ENCODE measurements at regions of chr19 and their contacts with region 1.

Region 1: GRCh38 chr19:2475702-2476450 is at the start of gene GADD45B:
- DNase-seq: peak; percentile 96
- H3K4me3 Mint-ChIP-seq: peak within 1 kb of the TSS; percentile 89
- H3K27ac Mint-ChIP-seq: peak within 1 kb of the TSS; percentile 83
- H3K4me1 Mint-ChIP-seq: peaks cover 22% of the 10 kb centered on the region
- H3K27me3 Mint-ChIP-seq: peaks cover 3% of the 10 kb centered on the region
- total RNA-seq, gene GADD45B: 52.2 to 54.3 TPM

Region 2: GRCh38 chr19:2455851-2456570 is 19.9 kb before region 1 on chr19:
- CTCF ChIA-PET with region 1: interaction called, 7 read pairs
- POLR2A ChIA-PET with region 1: interaction called, 57 read pairs
- DNase-seq: peak; percentile 58
- H3K4me3 Mint-ChIP-seq: peak overlapping the region; percentile 80
- H3K27ac Mint-ChIP-seq: peak overlapping the region; percentile 81
- H3K4me1 Mint-ChIP-seq: peaks cover 29% of the 10 kb centered on the region
- H3K27me3 Mint-ChIP-seq: no peaks in the 10 kb centered on the region

Region 3: GRCh38 chr19:2494444-2495129 is 18.7 kb after region 1 on chr19:
- CTCF ChIA-PET with region 1: interaction called, 8 read pairs
- POLR2A ChIA-PET with region 1: interaction called, 127 read pairs
- DNase-seq: peak; percentile 69
- H3K4me3 Mint-ChIP-seq: peak overlapping the region; percentile 73
- H3K27ac Mint-ChIP-seq: peak overlapping the region; percentile 65
- H3K4me1 Mint-ChIP-seq: peaks cover 45% of the 10 kb centered on the region
- H3K27me3 Mint-ChIP-seq: peaks cover 38% of the 10 kb centered on the region

Region 4: DNA sequence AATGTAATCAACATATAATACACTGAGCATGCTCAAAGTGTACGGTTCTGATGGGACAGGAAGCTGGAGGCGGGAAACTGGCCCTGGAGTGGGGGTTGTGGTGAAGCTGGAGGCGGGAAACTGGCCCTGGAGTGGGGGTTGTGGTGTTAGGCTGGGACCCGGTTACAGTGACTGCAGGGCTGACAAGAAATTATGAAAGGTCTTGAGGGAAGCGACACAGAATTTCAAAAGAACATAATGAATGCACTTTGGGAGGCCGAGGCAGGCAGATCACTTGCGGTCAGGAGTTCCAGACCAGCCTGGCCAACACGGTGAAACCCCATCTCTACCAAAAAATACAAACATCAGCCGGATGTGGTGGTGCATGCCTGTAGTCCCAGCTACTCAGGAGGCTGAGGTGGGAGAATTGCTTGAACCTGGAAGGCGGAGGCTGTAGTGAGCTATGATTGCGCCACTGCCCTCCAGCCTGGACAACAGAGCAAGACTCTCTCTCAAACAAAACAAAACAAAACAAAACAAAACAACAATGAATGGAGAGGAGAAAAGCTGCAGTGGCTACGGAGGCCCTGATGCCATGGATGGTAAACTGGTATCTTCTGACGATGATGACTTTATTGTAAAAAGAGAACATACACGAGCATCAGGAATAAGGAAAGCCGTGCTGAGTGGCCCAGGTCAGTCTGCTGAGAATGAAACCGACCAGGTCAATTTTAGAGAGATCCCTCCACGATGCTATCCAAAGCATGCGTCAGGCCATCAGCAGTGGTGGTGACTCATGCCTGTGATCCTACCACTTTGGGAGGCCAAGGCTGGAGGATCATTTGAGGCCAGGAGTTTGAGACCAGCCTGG is 61.9 kb after region 1 on chr19:
- CTCF ChIA-PET with region 1: interaction called, 15 read pairs
- POLR2A ChIA-PET with region 1: interaction called, 58 read pairs
- DNase-seq: peak; percentile 30
- H3K4me3 Mint-ChIP-seq: no peak overlapping the region
- H3K27ac Mint-ChIP-seq: peak overlapping the region; percentile 58
- H3K4me1 Mint-ChIP-seq: peaks cover 47% of the 10 kb centered on the region
- H3K27me3 Mint-ChIP-seq: peaks cover under 1% of the 10 kb centered on the region

Region 5: DNA sequence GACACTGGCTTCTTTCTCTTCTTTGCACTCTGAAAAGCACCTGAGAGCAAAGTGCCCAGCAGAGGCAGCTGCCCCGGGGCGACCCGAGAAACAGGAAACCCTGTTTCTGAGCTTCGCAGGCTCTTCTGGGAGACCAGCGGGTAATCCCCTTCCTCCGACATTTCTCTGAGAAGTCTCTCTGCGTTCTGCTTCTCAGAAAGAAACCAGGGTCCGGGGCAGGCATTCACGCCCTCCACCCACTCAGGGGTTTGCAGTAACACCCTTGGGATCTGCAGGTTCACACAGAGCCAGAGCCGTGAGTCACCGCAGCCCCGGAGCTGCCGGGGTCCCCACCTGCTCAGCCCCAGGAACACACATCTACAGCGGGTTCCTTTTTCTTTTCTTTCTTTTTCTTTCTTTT is 86.0 kb after region 1 on chr19:
- CTCF ChIA-PET with region 1: interaction called, 9 read pairs
- POLR2A ChIA-PET with region 1: interaction called, 63 read pairs
- DNase-seq: peak; percentile 80
- H3K4me3 Mint-ChIP-seq: peak overlapping the region; percentile 85
- H3K27ac Mint-ChIP-seq: peak overlapping the region; percentile 99
- H3K4me1 Mint-ChIP-seq: peaks cover 55% of the 10 kb centered on the region
- H3K27me3 Mint-ChIP-seq: peaks cover 2% of the 10 kb centered on the region

Region 6: DNA sequence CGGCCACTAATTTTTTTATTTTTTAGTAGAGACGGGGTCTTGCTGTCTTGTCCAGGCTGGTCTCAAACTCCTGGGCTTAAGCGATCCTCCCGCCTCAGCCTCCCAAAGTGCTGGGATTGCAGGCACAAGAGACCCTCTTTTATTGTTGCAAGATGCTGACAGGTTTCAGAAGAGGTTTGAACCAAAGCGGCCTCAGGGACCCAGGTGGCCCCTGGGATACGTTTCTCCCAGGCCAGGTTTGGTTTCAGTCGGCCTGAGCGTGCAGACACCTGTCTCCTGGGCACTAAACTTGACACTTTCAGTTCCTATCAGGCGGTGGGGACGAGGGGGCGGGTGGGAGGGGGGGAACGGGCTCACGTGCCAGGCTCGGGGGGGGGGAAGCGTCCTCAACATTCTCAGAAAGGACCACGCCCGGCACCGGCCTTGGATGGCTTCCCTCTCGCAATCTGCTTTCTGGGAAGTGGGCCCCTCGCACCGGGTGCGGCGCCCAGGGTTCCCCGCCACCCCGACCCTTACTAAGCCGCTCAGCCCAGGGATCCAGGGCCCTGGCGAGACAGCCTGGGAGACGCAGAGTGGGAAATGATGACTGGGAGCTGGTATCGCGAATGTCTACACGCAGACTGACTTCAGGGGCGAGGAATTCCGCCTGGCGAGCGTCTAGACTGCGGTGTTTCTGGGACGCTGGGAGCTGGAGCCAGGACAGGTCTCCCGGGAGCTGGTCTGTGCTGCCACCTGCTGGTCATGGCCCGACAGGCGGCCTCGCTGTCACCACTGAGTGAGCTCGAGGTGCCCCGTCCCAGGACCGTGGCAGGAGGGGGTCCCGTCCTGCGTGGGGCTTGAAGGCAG is 135.0 kb after region 1 on chr19:
- CTCF ChIA-PET with region 1: interaction called, 130 read pairs
- POLR2A ChIA-PET with region 1: interaction called, 220 read pairs
- DNase-seq: peak; percentile 89
- H3K4me3 Mint-ChIP-seq: peak overlapping the region; percentile 77
- H3K27ac Mint-ChIP-seq: peak overlapping the region; percentile 42
- H3K4me1 Mint-ChIP-seq: peaks cover 39% of the 10 kb centered on the region
- H3K27me3 Mint-ChIP-seq: peaks cover 28% of the 10 kb centered on the region

Region 7: DNA sequence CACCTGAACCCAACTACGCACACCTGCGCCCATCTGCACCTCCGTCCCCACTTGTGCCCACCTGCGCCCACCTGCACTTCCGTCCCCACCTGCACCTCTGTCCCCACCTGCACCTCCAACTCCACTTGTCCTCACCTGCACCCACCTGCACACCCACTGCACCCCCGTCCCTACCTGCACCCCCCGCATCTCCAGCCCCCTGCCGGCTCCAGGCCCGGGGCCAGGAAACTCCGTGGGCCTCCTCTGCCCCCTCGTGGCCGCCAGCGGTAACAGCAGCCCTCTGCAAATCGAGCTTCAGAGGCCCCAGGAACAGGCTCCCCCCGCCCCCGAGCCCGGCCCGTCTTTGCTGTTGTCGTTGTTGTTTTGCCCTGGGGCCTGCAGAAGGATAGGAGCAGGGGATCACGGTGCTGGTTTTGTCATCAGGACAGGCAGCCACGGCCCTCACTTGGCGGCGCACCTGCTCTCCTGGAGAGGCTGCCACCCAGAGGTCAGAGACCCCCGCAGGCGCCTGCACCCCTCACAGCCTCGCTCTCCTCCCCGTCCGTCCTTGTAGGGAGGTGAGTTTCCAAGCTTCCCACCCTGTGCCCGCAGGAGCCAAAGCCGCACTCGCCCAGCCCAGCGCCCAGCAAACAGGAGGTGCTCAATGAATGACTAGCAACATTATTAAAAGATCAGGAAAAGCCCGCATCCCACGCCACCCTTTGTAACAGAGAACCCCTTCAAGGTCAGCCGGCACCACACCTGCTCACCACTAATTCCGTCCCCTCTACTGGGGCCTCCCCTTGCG is 161.2 kb after region 1 on chr19:
- CTCF ChIA-PET with region 1: interaction called, 12 read pairs
- POLR2A ChIA-PET with region 1: interaction called, 21 read pairs
- DNase-seq: peak; percentile 78
- H3K4me3 Mint-ChIP-seq: no peak overlapping the region
- H3K27ac Mint-ChIP-seq: no peak overlapping the region
- H3K4me1 Mint-ChIP-seq: peaks cover 2% of the 10 kb centered on the region
- H3K27me3 Mint-ChIP-seq: peaks cover 6% of the 10 kb centered on the region